Gastrocnemius medialis (tissue), 4 donors: ENCODE measurements at regions of chr6 and their contacts with region 1.

Region 1: DNA sequence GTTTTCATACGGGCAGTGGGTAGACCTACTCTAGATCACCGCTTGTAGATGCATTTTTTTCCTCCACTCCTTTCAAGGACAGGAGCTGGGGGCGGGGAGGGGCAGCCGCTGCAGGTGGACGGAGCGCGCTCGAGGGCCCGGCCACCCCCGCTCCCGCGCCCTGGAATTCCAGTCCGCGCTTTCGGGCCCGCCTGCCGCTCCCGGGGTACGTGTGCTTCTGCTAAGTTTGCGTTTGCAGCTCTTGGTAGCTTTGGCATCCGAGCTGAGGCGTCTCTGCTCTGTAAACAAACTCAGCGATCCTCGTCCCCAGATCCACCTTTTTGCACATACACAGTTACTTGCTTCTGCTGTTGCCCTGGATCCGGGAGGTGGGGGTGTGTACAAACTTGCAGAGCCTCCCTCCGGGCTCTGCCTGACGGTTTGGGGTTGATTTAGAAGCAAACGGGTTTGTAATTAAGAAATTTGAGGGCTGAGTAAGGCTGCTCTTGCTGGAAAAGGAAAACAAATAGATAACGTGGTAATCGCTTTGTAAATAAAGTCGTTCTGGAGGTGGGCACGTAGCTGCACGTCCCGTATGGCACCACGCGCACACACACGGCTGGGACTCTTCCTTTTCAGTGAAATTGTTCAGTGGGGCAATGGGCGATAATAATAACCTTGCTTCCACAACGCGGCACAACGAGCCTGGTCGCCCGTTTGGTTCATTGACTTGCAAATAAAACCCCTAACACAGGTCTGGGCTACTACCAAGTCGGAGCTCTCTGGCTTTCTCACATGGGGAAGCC is 976 bp upstream of the CITED2 start:
- DNase-seq: peak; percentile 93 to 94
- ATAC-seq: peak; percentile 63 to 71
- H3K4me3 ChIP-seq: peak overlapping the region; percentile 85 to 97 (median 87)
- H3K27ac ChIP-seq: peak overlapping the region; percentile 94 to 97 (median 96)
- H3K4me1 ChIP-seq: peaks cover 22 to 26% of the 10 kb centered on the region in 2 donors
- H3K27me3 ChIP-seq: no peaks in the 10 kb centered on the region
- CTCF ChIP-seq: no peak
- POLR2A ChIP-seq: peak; percentile 38 to 74

Region 2: DNA sequence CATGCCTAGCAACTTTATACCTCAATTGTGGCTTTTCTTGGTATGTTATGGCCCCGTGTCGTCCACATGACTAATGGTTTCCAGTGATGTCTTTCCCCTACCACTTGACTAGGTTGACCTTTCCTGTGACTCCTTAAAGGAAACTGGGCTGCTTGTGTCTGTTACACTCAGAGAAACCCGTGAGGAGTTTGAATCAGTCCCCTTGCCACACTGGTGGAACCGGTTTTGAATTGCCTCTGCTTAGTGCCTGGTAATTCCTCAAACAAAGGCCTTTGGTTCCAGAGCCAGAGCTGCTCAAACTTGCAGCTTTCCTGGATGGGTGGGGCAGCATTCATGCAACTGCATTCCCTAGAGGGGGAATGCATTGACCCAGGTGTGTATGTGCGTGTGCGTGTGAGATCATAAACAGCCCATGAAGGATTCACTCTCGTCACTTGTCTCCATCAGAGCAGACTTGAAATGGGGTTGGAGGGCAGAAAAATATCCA is 557.6 kb before region 1 on chr6:
- in situ Hi-C with region 1: loop called in 2 of 4 experiments (anchors 25 kb)
- intact Hi-C with region 1: no loop called
- DNase-seq: no peak
- ATAC-seq: no peak
- H3K4me3 ChIP-seq: no peak overlapping the region
- H3K27ac ChIP-seq: no peak overlapping the region
- H3K4me1 ChIP-seq: no peaks in the 10 kb centered on the region
- H3K27me3 ChIP-seq: no peaks in the 10 kb centered on the region
- CTCF ChIP-seq: no peak
- POLR2A ChIP-seq: no peak

Region 3: DNA sequence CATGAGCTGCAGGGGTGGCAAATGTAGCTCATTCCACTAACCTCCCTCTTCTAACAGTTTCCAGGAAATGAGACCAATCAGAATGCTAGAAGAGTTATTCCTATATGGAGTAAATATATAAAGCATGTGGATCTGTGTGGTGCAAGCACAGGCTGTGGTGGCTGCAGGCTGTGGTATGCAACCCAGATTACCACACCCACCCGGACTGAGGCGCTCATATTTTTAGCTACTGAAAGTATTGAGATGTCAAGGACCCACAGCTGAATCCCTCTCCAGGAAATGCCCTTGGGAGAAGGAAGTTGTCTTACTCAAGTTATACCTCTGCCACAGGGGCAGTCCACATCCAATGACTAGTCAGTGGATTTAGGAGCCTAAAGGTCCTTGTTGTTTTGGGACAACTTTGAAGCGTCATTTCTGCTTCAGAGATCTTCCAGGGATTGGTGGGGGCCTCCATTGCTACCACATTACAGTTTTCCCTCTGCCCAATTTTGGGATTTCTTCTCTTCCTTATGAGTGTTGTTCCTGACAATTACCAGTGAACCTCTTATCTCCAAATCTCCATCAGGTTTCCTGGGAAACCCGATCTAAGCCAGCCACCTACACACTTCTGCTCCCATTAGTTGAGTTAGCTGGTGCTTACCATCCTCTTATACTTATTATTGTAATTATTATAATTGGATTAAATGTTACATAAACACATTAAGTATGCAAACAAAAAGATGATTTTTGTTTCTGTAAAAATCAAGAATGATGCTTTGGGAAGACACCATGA is 375.3 kb before region 1 on chr6:
- in situ Hi-C with region 1: no loop called
- intact Hi-C with region 1: no loop called
- DNase-seq: no peak
- ATAC-seq: no peak
- H3K4me3 ChIP-seq: no peak overlapping the region
- H3K27ac ChIP-seq: no peak overlapping the region
- H3K4me1 ChIP-seq: no peaks in the 10 kb centered on the region
- H3K27me3 ChIP-seq: no peaks in the 10 kb centered on the region
- CTCF ChIP-seq: no peak
- POLR2A ChIP-seq: no peak

Region 4: DNA sequence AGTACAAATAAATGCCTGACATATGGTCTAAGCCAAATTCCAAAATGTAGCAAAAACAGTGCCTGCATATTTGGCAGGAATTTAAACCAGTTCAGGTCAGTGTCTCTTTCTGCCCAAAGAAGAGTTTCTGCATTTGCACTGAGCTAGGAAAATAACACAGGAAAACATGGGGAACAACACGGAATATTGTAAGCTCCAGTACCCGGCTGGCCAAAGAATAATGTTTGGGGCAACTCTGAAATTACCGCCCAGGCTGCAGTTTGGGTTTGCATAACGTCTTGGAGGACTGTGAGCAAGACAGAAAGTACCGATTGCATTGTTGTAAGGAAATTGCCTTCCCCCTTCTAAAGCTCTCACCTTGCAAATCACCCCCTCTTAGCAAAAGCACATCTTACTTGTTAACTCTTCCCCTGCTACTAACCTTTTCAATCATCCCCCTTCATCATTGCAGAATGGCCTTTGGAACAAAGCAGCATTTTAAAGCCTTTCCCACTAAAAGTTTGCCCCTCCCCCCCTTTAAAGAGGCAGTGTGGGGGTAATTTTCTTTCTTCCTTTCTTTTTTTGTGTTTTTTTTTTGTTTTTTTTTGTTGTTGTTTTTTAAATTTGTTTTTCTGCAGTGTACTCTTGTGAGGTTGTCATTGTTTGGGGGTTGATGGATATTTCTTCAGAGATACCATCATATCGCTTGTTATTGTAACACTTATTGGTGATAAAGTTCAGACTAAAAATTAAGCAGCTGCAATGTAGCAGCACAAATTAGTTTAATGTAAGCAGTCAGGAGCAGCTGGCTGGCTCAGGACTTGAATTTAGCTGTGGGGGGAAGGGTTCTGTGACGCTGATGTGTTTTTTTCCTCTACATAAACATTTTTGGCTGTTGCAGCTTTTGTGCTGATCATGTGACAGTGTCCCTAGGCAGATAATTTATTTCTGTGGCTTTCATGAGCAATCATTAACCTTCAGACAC is 99.0 kb after region 1 on chr6:
- in situ Hi-C with region 1: no loop called
- intact Hi-C with region 1: loop called (anchors 5 kb)
- DNase-seq: peak in 1 of 2 donors; percentile 16
- ATAC-seq: peak in 1 of 2 donors; percentile 60
- H3K4me3 ChIP-seq: peak overlapping the region in 1 of 4 donors; percentile 3
- H3K27ac ChIP-seq: peak overlapping the region in 3 of 4 donors; percentile 12 to 52 (median 33)
- H3K4me1 ChIP-seq: peaks cover 24 to 28% of the 10 kb centered on the region in 2 donors
- H3K27me3 ChIP-seq: no peaks in the 10 kb centered on the region
- CTCF ChIP-seq: no peak
- POLR2A ChIP-seq: no peak

Region 5: GRCh38 chr6:139591075-139591865 is 215.8 kb after region 1 on chr6:
- in situ Hi-C with region 1: no loop called
- intact Hi-C with region 1: loop called (anchors 5 kb)
- DNase-seq: no peak
- ATAC-seq: peak; percentile 59 to 73
- H3K4me3 ChIP-seq: no peak overlapping the region
- H3K27ac ChIP-seq: peak overlapping the region; percentile 61 to 84 (median 79)
- H3K4me1 ChIP-seq: peaks cover 49% of the 10 kb centered on the region in 2 donors
- H3K27me3 ChIP-seq: no peaks in the 10 kb centered on the region
- CTCF ChIP-seq: no peak
- POLR2A ChIP-seq: peak in 1 of 2 donors; percentile 15

Region 6: DNA sequence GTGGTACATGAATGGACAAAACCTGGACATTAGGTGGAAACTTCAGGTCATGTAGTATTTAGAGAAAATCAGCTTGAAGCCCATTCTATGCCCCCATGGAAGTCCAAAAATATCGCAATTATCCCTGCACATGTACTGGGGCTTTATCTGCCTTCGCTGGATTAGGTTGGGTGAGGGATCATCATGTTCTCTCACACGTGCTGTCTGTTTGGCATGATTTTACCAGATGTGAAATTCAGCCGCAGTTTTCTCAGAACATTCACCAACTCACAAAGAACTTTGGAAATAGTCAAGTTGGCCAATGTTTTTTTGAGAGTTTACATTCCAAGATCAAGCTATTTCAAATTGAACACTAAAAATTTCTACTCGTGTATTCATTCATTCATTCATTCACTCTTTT is 458.8 kb after region 1 on chr6:
- in situ Hi-C with region 1: no loop called
- intact Hi-C with region 1: loop called (anchors 1 kb)
- DNase-seq: peak in 1 of 2 donors; percentile 18
- ATAC-seq: peak; percentile 14 to 58
- H3K4me3 ChIP-seq: no peak overlapping the region
- H3K27ac ChIP-seq: no peak overlapping the region
- H3K4me1 ChIP-seq: peaks cover 20 to 25% of the 10 kb centered on the region in 2 donors
- H3K27me3 ChIP-seq: no peaks in the 10 kb centered on the region
- CTCF ChIP-seq: no peak
- POLR2A ChIP-seq: no peak

Region 7: GRCh38 chr6:140441256-140441655 is 1065.8 kb after region 1 on chr6:
- in situ Hi-C with region 1: loop called (anchors 10 to 25 kb)
- intact Hi-C with region 1: loop called (anchors 1 kb)
- DNase-seq: peak; percentile 26 to 40
- ATAC-seq: peak; percentile 77 to 87
- H3K4me3 ChIP-seq: no peak overlapping the region
- H3K27ac ChIP-seq: peak overlapping the region in 1 of 4 donors; percentile 15
- H3K4me1 ChIP-seq: peaks cover 25 to 32% of the 10 kb centered on the region in 2 donors
- H3K27me3 ChIP-seq: no peaks in the 10 kb centered on the region
- CTCF ChIP-seq: peak; percentile 34 to 59 (median 42)
- POLR2A ChIP-seq: no peak